Heart left ventricle (tissue), 16 donors: ENCODE measurements at regions of chr18 and their contacts with region 1.

Region 1: DNA sequence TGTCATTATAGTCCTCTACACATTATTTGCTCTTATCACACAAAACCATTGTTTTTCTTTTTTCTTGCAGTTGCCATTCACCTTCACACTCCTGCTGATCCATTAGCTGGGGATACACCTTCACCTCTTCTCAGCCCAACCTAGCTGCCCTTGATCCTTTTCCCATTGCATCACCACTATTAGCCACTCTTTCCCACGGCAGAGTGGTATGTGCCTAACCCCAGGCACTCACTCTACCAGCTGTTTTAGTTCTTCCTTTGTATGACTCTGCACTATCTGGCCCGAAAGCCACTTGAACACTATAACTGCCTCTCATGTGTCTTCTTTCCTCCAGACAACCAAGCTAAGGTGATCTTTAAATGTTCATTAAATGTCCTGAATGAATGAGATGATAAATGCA is 145.4 kb upstream of the PIK3C3 start:
- DNase-seq: no peak
- ATAC-seq: no peak
- H3K4me3 ChIP-seq: no peak overlapping the region
- H3K27ac ChIP-seq: no peak overlapping the region
- H3K4me1 ChIP-seq: no peaks in the 10 kb centered on the region
- H3K27me3 ChIP-seq: no peaks in the 10 kb centered on the region
- CTCF ChIP-seq: no peak
- POLR2A ChIP-seq: no peak

Region 2: GRCh38 chr18:41737218-41737617 is 72.4 kb before region 1 on chr18:
- intact Hi-C with region 1: no loop called
- DNase-seq: no peak
- ATAC-seq: no peak
- H3K4me3 ChIP-seq: no peak overlapping the region
- H3K27ac ChIP-seq: no peak overlapping the region
- H3K4me1 ChIP-seq: no peaks in the 10 kb centered on the region
- H3K27me3 ChIP-seq: no peaks in the 10 kb centered on the region
- CTCF ChIP-seq: no peak
- POLR2A ChIP-seq: no peak

Region 3: DNA sequence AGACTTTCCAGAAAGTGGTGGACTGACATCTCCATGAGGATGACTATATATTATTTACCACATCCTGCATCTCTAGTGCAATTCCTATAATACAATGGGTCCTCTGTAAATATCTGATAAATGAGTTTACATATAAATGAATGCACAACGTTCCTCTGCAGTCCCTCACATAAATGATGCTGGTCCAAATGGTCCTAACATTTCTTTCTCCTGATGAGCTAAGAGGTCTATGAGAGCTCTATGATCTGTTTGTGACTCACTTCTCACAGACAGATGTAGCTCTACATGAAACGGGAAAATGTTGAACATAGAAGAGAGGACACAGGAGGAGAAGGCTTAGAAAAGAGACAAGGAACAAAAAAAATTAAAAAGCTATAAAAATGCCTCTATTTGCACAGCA is 55.8 kb before region 1 on chr18:
- intact Hi-C with region 1: loop called in 1 of 10 experiments (anchors 10 kb)
- DNase-seq: no peak
- ATAC-seq: no peak
- H3K4me3 ChIP-seq: no peak overlapping the region
- H3K27ac ChIP-seq: no peak overlapping the region
- H3K4me1 ChIP-seq: no peaks in the 10 kb centered on the region
- H3K27me3 ChIP-seq: no peaks in the 10 kb centered on the region
- CTCF ChIP-seq: no peak
- POLR2A ChIP-seq: no peak

Region 4: DNA sequence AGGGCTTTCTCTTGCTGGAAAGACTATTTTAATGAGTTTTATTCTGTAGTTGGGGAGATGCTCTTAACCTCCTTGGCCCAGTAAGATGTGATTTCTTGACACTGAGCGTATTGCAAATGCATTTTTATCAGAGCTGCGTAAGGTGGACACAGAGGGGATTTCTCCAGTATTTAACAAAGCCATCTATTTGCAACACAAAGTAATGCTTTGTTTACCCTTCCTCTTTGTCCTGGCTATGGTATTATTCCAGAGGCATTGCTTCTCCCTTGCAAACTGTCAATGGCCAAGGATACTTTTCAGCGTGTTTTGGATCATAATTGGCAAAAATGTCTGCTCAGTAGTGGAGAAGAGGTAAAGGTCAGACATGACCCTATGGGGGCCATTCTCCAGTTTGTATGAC is 54.6 kb after region 1 on chr18:
- intact Hi-C with region 1: loop called in 1 of 10 experiments (anchors 10 kb)
- DNase-seq: no peak
- ATAC-seq: no peak
- H3K4me3 ChIP-seq: no peak overlapping the region
- H3K27ac ChIP-seq: no peak overlapping the region
- H3K4me1 ChIP-seq: no peaks in the 10 kb centered on the region
- H3K27me3 ChIP-seq: no peaks in the 10 kb centered on the region
- CTCF ChIP-seq: no peak
- POLR2A ChIP-seq: no peak